Activated B cell treated with CpG ODN at 0.5 μM for 24 hours (primary cell): ENCODE measurements at regions of chr17 and their contacts with region 1.

Region 1: GRCh38 chr17:36755586-36755985 is 154.2 kb downstream of the MRM1 start:
- DNase-seq: no peak
- ATAC-seq: no peak
- H3K4me3 Mint-ChIP-seq: no peak overlapping the region
- H3K27ac Mint-ChIP-seq: no peak overlapping the region
- H3K4me1 Mint-ChIP-seq: no peaks in the 10 kb centered on the region
- H3K27me3 Mint-ChIP-seq: peaks cover 15% of the 10 kb centered on the region
- CTCF ChIP-seq: no peak

Region 2: DNA sequence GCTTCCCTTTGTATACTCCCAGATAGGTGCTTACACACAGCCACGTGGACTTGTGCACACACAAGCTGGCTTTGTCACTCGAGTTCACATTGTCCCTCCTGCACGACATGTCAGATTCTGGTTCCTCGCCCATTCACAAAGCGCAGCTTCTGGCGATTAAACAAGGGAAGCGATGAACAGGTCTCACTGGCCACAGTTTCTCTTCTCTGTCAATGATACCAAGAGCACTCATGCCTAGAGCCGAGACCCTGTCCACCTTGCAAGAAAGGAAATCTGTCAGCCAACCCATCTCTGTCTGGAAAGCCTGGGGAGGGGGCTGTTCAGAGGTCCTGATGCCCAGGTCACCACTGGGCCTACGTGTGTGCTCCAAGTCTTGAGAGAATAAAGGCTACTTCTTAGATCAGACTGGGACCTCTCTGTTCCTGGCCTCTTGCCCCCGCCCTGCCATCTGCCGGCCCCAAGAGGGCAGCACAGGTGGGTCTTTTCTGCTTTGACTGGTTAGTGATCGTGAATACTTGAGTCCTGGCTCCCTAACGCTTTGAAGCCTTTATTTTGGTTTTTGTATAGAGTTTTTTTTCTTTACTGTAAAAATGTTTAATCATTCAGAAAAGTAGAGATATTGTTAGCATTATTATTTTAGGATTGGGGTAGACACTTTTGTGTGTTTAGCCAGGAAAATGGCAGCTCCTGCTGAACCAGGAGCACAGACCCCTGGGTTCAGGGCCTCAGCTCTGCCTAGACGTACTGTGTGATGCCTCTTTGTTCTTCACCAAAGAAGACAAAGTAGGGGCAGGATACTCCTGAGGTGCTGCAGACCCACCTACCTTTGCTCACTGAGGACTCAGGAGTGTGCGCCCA is 49.5 kb before region 1 on chr17:
- CTCF ChIA-PET with region 1: interaction called, 5 read pairs
- POLR2A ChIA-PET with region 1: no interaction called
- intact Hi-C with region 1: loop called (anchors 2 kb)
- DNase-seq: no peak
- ATAC-seq: peak; percentile 61
- H3K4me3 Mint-ChIP-seq: no peak overlapping the region
- H3K27ac Mint-ChIP-seq: no peak overlapping the region
- H3K4me1 Mint-ChIP-seq: no peaks in the 10 kb centered on the region
- H3K27me3 Mint-ChIP-seq: peaks cover 36% of the 10 kb centered on the region
- CTCF ChIP-seq: no peak